ENCODE measurements at regions of chr11 and their contacts with region 1.

Region 1: GRCh38 chr11:66311965-66312548 is 4.8 kb downstream of the CD248 start:
- DNase-seq: peak; percentile 95
- ATAC-seq: peak; percentile 84
- H3K4me3 ChIP-seq: peak overlapping the region; percentile 41 to 57
- H3K27ac ChIP-seq: peak overlapping the region; percentile 72
- H3K4me1 ChIP-seq: peaks cover 16 to 37% of the 10 kb centered on the region in 2 experiments
- H3K27me3 ChIP-seq: no peaks in the 10 kb centered on the region
- CTCF ChIP-seq: peak; percentile 77 to 97 (median 94); a peak in 5 of 6 replicates
- POLR2A ChIP-seq: peak; percentile 32
- RAD21 ChIP-seq: peak; percentile 100

Region 2: GRCh38 chr11:66282468-66283386 is 29.3 kb before region 1 on chr11:
- CTCF ChIA-PET with region 1: interaction called, 25 read pairs
- POLR2A ChIA-PET with region 1: interaction called, 18 read pairs
- RAD21 ChIA-PET with region 1: no interaction called
- intact Hi-C with region 1: no loop called
- DNase-seq: peak; percentile 91
- ATAC-seq: peak; percentile 89
- H3K4me3 ChIP-seq: no peak overlapping the region
- H3K27ac ChIP-seq: peak overlapping the region; percentile 31; the same call in 1 of the 2 replicates
- H3K4me1 ChIP-seq: peaks cover 2 to 29% of the 10 kb centered on the region in 2 experiments; a peak in 3 of 4 replicates
- H3K27me3 ChIP-seq: no peaks in the 10 kb centered on the region
- CTCF ChIP-seq: peak in 2 of 3 experiments; percentile 88 to 96; a peak in 4 of 6 replicates
- POLR2A ChIP-seq: no peak
- RAD21 ChIP-seq: no peak

Region 3: DNA sequence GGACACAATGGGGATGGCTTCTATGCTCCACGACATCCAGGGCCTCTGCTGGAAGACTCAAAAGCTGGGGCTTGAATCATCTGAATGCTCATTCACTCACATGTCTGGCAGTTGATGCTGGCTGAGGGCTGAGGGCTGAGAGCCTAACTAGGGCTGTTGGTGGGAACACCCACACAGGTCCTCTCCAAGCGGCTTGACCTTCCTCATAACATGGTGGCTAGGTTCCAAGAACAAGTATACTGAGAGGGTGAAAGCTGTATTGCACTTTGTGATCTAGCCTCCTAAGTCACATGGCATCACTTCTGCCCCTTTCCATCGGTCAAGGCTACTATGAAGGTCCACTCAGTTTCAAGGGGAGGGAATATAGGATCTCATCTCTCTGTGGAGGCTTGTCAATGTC is 12.9 kb before region 1 on chr11:
- CTCF ChIA-PET with region 1: interaction called, 21 read pairs
- POLR2A ChIA-PET with region 1: interaction called, 4 read pairs
- RAD21 ChIA-PET with region 1: interaction called in 1 of 2 experiments, 3 read pairs
- intact Hi-C with region 1: no loop called
- DNase-seq: no peak
- ATAC-seq: no peak
- H3K4me3 ChIP-seq: no peak overlapping the region
- H3K27ac ChIP-seq: no peak overlapping the region
- H3K4me1 ChIP-seq: no peaks in the 10 kb centered on the region
- H3K27me3 ChIP-seq: no peaks in the 10 kb centered on the region
- CTCF ChIP-seq: no peak
- POLR2A ChIP-seq: no peak
- RAD21 ChIP-seq: no peak

Region 4: DNA sequence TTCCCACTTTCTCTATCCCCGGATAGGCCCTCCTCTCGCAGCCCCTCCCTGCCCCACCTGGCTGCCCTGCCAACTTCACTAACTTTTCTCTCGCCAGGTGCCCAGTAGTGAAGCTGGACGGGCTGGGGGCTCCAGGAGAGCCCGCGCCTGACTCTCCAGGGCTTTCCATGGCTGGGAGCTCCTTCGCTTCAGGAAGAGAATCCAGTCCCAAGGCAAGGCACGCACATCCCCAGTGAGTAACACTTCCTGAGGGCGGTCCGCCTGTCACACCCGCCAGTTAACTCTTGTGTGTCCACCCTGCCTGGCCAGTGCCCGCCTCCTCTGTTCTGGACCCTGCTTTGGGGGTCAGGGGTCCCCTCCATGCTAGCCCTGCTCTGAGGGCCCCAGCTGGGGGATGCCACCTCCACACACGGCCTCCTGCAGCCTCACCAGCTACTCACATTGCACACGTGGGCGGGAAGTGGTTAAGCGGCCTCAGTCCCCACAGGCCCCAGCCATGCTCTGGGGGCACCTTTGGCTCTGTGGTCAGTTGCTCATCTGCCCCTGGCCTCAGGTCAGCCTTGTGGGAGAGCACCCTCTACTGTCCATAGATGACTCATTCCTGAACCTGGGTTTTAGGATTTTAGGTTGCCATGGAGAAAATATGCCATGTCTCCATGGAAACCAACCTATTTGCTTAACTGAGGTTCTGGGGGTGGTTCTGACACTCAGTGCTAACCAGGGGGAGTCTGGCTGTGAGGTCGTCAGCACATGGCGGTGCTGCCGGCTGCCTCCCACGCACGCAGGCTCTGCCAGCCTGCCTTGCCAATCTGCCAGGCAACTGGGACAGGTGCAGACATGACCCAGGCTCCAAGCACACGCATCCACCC is 24.4 kb after region 1 on chr11 and contains the start of gene RIN1:
- CTCF ChIA-PET with region 1: interaction called, 42 read pairs
- POLR2A ChIA-PET with region 1: interaction called, 16 read pairs
- RAD21 ChIA-PET with region 1: interaction called, 12 to 17 read pairs
- intact Hi-C with region 1: loop called (anchors 1 kb)
- DNase-seq: peak; percentile 82
- ATAC-seq: peak; percentile 82
- H3K4me3 ChIP-seq: peak within 1 kb of the TSS; percentile 70 to 77
- H3K27ac ChIP-seq: peak within 1 kb of the TSS; percentile 89
- H3K4me1 ChIP-seq: peaks cover 16 to 36% of the 10 kb centered on the region in 2 experiments
- H3K27me3 ChIP-seq: no peaks in the 10 kb centered on the region
- CTCF ChIP-seq: peak in 2 of 3 experiments; percentile 5 to 24; a peak in 2 of 6 replicates
- POLR2A ChIP-seq: peak; percentile 56
- RAD21 ChIP-seq: no peak
- total RNA-seq, gene RIN1: 38.7 TPM

Region 5: DNA sequence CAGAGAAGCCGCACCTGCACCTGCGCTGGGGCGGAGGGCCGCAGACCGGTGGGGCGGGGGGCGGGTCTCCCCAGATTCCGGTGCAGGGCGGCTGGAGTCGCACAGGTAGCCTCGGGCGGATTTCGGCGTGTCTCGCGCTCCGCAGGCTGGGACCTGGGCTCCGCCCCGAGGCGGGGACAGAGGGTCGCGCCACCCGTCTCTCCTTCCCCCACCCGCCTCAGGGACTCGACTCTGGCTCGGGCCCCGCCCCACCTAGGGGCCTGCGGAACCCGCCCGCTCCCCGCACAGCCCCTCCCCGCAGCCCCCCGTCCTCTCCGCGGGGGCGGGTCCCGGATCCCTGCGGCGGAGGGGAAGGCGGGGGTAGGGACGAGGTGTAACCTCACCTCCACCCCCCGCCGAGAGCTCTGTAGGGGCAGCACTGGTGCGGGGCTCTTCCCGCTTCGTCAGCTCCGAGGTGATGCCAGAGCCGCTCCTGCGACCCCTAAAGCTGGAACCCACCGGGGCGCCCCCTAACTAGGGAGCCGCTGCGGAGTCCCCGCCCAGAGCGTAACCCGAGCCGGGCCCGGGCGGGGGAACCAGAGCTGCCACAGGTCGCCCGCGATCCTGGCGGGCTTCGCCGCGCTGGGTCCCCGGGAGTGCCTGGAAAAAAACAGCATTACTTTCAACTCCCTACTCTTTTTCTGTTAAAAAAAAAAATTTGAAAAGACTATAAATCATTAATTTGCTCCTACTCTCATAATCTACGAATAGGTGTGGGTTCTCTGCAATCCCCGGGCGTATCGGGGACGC is 59.8 kb after region 1 on chr11 and contains the start of gene SLC29A2:
- CTCF ChIA-PET with region 1: no interaction called
- POLR2A ChIA-PET with region 1: interaction called, 5 read pairs
- RAD21 ChIA-PET with region 1: no interaction called
- intact Hi-C with region 1: loop called (anchors 5 kb)
- DNase-seq: peak; percentile 82
- ATAC-seq: peak; percentile 86
- H3K4me3 ChIP-seq: peak within 1 kb of the TSS; percentile 76 to 88
- H3K27ac ChIP-seq: peak within 1 kb of the TSS; percentile 99
- H3K4me1 ChIP-seq: peaks cover 19 to 33% of the 10 kb centered on the region in 2 experiments
- H3K27me3 ChIP-seq: no peaks in the 10 kb centered on the region
- CTCF ChIP-seq: no peak
- POLR2A ChIP-seq: peak; percentile 40
- RAD21 ChIP-seq: no peak
- total RNA-seq, gene SLC29A2: 39.7 TPM

Region 6: GRCh38 chr11:66429983-66430602 is 118.0 kb after region 1 on chr11:
- CTCF ChIA-PET with region 1: interaction called, 5 read pairs
- POLR2A ChIA-PET with region 1: no interaction called
- RAD21 ChIA-PET with region 1: no interaction called
- intact Hi-C with region 1: loop called (anchors 1 kb)
- DNase-seq: peak; percentile 44
- ATAC-seq: peak; percentile 96
- H3K4me3 ChIP-seq: no peak overlapping the region
- H3K27ac ChIP-seq: no peak overlapping the region
- H3K4me1 ChIP-seq: no peaks in the 10 kb centered on the region; a peak in 1 of 4 replicates
- H3K27me3 ChIP-seq: no peaks in the 10 kb centered on the region
- CTCF ChIP-seq: peak; percentile 89 to 98 (median 95)
- POLR2A ChIP-seq: no peak
- RAD21 ChIP-seq: peak; percentile 91

Measured in HCT116 (cell line).